SK-N-SH (cell line): ENCODE measurements at regions of chr13 and their contacts with region 1.

Region 1: DNA sequence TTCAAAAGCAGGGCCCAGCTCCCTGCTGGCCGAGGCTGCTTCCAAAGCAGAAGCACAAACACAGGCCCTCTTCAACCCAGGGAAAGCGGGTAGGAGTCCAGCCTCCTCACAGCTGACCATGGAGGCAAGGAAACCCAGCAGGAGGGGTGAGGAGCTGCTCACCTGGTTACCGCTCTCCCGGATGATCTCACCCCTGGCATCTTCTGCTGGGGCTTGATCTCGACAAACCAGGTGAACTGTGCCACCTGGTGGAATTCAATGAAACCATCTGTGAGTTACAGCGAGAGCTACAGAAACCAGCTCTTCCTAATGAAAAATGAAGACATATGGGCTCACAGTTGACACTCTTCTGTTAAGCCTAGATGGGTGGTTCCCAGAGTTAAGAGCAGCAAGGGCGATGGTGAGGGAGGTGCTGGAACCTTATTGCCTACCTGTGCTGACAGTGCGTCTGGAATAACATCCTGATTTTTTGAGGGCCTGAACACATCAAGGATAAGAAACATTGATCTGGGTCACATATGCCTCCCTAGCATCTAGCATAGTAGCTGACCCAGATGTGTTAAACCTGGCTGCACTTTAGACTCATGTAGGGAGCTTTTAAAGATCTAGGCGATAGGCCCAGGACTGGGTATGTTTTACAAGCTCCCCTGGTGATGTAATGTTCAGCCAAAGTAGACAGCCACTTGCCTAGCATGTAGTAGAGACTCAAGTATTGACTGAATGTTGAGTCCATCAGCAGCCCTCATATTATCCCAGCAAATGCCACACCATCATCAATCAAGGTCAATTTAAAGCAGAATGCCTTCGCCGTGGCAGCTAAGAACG is 6.1 kb downstream of the DHRS12 start:
- DNase-seq: peak; percentile 76
- H3K4me3 ChIP-seq: no peak overlapping the region
- H3K27ac ChIP-seq: peak overlapping the region in 1 of 2 experiments; percentile 50; a peak in 1 of 4 replicates
- H3K4me1 ChIP-seq: peaks cover 19 to 44% of the 10 kb centered on the region in 2 experiments
- H3K27me3 ChIP-seq: no peaks in the 10 kb centered on the region
- CTCF ChIP-seq: peak; percentile 59
- EP300 ChIP-seq: no peak
- RAD21 ChIP-seq: peak; percentile 93

Region 2: DNA sequence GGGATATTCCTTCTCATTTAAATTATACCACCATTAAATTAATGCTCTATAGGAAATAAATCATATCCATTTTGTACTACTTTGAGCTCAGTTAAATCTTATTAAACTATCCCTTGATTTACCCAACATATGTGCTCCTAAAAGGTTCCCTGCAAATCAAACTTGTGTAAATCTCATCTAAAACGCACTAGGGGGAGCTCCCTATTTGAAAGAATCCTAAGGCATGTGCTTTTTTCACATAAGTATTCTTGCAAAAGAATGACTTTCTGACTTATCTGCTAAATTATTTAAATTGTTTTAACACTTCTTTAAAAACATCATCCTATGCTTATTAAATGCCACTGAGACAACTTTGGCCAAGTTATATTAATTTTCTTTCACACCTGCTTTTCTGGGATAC is 353.0 kb before region 1 on chr13:
- CTCF ChIA-PET with region 1: interaction called, 33 read pairs
- POLR2A ChIA-PET with region 1: interaction called, 4 read pairs
- DNase-seq: peak; percentile 29
- H3K4me3 ChIP-seq: no peak overlapping the region
- H3K27ac ChIP-seq: no peak overlapping the region
- H3K4me1 ChIP-seq: peaks cover 0 to under 1% of the 10 kb centered on the region in 2 experiments; a peak in 2 of 4 replicates
- H3K27me3 ChIP-seq: no peaks in the 10 kb centered on the region
- CTCF ChIP-seq: peak; percentile 63
- EP300 ChIP-seq: no peak
- RAD21 ChIP-seq: peak; percentile 67

Region 3: DNA sequence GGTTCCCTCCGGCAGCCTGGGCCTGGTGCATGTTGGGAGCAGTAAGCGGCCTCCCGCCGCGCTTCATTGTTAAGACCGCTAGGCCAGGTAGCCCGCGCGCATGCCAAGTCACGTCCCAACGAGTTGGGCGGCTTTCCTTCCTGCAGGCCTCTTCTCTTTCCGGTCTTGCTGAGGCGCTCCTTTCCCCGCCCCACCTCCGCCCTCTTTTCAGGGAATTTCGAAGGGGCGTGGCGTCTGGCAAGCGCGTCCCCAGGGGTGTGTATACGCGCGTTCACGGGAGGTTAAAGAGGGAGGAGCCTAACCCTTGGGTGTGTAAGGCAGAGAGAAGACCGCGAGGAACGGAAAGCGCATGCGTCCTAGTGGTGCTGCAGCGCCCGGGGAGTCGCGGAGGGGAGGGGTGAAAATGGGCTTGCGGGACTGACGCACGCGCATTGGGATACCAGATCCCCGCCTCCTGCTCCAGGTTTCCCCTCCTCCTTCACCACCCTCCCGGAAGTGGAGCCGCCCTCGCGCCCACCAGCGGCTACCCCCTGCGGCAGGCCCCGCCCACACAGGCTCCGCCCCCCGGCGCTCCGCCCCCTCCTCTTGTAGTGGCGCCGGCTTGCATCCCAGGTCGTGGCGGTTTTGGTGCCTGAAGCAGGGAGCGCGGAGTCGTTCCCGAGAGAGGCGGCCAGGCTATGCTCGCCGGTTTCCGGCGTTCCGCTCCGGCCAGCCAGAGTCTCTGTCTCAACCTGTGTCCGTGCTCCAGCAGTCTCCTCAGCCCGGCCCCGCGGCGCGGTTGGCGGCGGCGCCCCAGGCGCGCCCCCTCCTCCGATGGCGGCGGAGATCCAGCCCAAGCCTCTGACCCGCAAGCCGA is 213.8 kb before region 1 on chr13 and contains the start of gene WDFY2:
- CTCF ChIA-PET with region 1: interaction called, 25 read pairs
- POLR2A ChIA-PET with region 1: interaction called, 7 read pairs
- DNase-seq: peak; percentile 96
- H3K4me3 ChIP-seq: peak within 1 kb of the TSS; percentile 83 to 98
- H3K27ac ChIP-seq: peak within 1 kb of the TSS; percentile 89 to 97
- H3K4me1 ChIP-seq: peaks cover 10 to 18% of the 10 kb centered on the region in 2 experiments; a peak in 3 of 4 replicates
- H3K27me3 ChIP-seq: no peaks in the 10 kb centered on the region
- CTCF ChIP-seq: no peak
- EP300 ChIP-seq: peak in 1 of 2 experiments; percentile 50; a peak in 1 of 4 replicates
- RAD21 ChIP-seq: no peak; the same call in 1 of the 2 replicates
- polyA plus RNA-seq, gene WDFY2: 4.1 and 5.4 TPM in 2 replicates

Region 4: DNA sequence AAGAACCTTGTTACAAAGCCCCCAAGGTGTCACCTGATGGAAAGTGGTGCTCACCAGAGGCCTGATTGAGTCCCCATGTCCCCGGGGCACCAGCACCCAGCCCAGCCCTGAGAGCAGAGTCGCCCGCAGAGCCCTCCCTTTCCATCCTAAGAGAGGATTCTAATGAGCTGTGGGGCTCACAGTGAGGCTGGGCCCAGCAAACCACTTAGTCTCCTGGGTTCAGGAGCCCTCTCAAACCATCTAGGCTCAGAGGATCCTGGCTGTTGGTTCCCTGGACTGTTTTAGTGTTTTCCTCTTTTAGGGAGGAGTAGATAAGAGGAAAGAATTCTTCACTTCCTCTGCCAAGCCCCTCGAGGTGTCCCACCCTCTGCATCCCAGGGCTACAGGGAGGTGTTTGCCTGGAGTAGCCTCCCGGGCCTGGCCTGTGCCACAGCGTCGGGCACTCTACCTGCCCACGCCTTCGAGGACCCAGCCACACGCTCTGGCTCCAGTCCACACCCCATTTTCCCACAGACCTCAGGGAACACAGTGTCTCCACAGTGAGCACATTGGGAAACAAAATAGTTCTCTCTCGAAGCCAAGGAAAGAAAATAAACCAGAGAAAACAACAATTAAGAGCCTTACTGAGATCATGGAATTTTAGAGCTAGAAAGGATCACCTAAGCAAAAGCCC is 28.3 kb before region 1 on chr13:
- CTCF ChIA-PET with region 1: interaction called, 22 read pairs
- POLR2A ChIA-PET with region 1: no interaction called
- DNase-seq: peak; percentile 52
- H3K4me3 ChIP-seq: no peak overlapping the region
- H3K27ac ChIP-seq: peak overlapping the region in 1 of 2 experiments; percentile 19; a peak in 1 of 4 replicates
- H3K4me1 ChIP-seq: peaks cover 4 to 7% of the 10 kb centered on the region in 2 experiments; a peak in 3 of 4 replicates
- H3K27me3 ChIP-seq: no peaks in the 10 kb centered on the region
- CTCF ChIP-seq: no peak
- EP300 ChIP-seq: no peak
- RAD21 ChIP-seq: no peak

Region 5: DNA sequence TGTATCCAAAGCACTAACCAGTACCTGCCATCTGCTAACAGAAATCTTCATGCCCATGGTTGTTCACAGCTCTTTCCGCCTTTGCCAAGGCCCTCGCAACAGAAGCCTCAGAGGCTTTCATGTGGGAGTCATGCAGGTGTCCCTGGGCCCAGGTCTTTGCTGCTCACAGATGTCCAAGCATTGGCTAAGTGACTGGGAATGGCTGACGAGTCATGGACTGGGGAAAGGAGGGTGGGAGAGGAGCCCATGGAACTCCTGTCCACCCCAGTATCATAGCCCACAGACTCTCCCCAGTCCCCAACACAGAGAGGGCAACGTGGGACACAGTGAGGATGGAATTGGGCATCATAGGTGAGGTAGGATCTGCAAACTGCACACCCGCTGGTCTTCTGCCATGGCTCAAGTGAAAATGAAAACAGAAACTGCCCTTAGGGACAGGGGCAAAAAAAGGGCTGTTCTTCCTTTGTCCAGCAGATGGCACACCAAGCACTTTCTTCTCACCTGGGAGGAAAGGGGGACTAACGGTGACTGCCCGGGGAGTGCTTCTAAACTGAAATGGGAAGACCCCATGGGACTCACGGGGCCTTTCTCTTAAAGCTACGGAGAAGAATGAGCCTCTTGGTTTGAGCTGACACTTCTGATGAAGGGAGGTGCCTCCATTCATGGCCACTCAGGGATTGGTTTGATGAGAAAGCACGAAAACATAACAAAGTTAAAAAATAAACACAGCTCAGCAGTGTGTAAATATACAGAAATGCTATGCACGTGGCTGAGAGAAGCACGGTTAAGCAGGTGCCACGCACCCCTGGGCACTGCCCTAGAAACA is 17.2 kb after region 1 on chr13:
- CTCF ChIA-PET with region 1: interaction called, 12 read pairs
- POLR2A ChIA-PET with region 1: no interaction called
- DNase-seq: peak; percentile 79
- H3K4me3 ChIP-seq: peak overlapping the region; percentile 23 to 47; a peak in 3 of 4 replicates
- H3K27ac ChIP-seq: no peak overlapping the region
- H3K4me1 ChIP-seq: peaks cover 0 to 14% of the 10 kb centered on the region in 2 experiments; a peak in 1 of 4 replicates
- H3K27me3 ChIP-seq: no peaks in the 10 kb centered on the region
- CTCF ChIP-seq: peak; percentile 83
- EP300 ChIP-seq: no peak
- RAD21 ChIP-seq: peak; percentile 83

Region 6: GRCh38 chr13:51887468-51887867 is 89.6 kb after region 1 on chr13:
- CTCF ChIA-PET with region 1: no interaction called
- POLR2A ChIA-PET with region 1: no interaction called
- DNase-seq: no peak
- H3K4me3 ChIP-seq: no peak overlapping the region
- H3K27ac ChIP-seq: no peak overlapping the region
- H3K4me1 ChIP-seq: peaks cover 0 to 5% of the 10 kb centered on the region in 2 experiments; a peak in 1 of 4 replicates
- H3K27me3 ChIP-seq: no peaks in the 10 kb centered on the region; the same call in 1 of the 2 replicates
- CTCF ChIP-seq: no peak
- EP300 ChIP-seq: no peak
- RAD21 ChIP-seq: no peak